ENCODE measurements at regions of chr9 and their contacts with region 1.

Region 1: DNA sequence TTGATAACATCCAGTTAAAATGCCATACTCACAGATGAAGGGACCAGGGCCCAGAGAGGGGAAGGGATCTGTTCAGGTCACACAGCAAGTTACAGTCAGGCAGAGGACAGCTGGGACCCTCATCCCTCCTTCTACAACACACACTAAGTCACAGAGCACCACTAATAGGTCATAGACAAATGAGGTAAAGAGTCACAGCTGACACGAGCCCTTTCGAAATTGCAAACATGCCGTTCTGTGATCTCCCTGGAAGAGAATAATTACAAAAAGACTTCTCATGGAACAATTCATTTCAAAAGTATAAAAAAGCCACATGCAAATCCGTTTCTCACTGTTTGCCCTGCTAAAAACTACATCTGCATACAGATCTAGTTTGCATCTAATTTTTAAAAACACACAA is 15.5 kb downstream of the IGFBPL1 start:
- DNase-seq: no peak
- H3K4me3 Mint-ChIP-seq: no peak overlapping the region
- H3K27ac Mint-ChIP-seq: no peak overlapping the region
- H3K4me1 Mint-ChIP-seq: no peaks in the 10 kb centered on the region
- H3K27me3 Mint-ChIP-seq: peaks cover 14% of the 10 kb centered on the region

Region 2: DNA sequence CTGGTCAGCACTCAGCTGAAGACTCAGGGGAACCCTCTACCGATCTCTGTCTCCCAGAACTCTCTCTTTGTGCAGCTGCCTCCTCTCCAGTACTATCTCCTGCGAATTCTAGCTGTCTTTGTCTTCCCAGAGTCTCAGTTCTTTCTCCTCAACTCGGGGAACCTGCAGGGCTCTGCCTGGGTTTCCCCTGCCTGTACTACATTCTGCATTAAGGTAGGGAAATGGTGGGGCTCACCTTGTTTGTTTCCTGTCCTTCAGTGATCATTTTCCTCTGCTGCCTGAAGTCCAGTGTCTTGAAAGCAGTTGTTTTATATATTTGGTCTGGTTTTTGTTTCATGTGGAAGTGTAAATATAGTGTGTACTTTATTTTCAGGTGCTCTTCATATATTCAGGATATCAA is 58.7 kb after region 1 on chr9:
- intact Hi-C with region 1: loop called (anchors 5 kb)
- DNase-seq: no peak
- H3K4me3 Mint-ChIP-seq: no peak overlapping the region
- H3K27ac Mint-ChIP-seq: no peak overlapping the region
- H3K4me1 Mint-ChIP-seq: no peaks in the 10 kb centered on the region
- H3K27me3 Mint-ChIP-seq: no peaks in the 10 kb centered on the region

Measured in activated T-helper 1 cell treated with anti-CD3 and anti-CD28 coated beads, Interleukin-12 subunit alpha, Interleukin-12 subunit beta, Interleukin-2, Interleukin-4 antibody, amounts not matched to agents 30 ng/mL and 10 ng/mL and 1 ng/mL, durations not matched to agents 14 hours and 24 hours and 36 hours (primary cell).